ENCODE measurements at regions of chr10 and their contacts with region 1.

Region 1: DNA sequence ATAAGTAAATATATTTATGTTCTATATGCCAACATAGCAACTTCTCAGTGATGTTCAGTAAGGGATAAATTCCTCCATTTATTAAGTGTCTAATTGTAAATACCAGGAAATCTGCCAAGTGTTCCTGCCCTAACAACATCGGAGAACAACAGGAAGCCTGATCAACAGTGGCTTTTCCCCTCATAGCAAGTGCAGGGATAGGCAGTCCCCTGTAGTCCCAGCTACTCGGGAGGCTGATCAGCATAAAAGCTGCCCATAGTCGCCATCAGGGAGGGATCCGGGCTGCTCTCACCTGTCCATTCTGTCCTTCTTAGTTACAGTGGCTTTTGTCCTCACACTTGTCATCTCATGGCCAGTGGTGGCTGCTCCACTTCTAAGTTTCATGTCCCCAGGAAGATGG is 141.3 kb downstream of the IDE start:
- DNase-seq: no peak
- ATAC-seq: peak in 1 of 4 donors; percentile 37
- H3K4me3 ChIP-seq: no peak overlapping the region
- H3K27ac ChIP-seq: peak overlapping the region in 11 of 12 donors; percentile 1 to 75 (median 65)
- H3K4me1 ChIP-seq: peaks cover 0 to 33% (median 14%) of the 10 kb centered on the region in 12 donors
- H3K27me3 ChIP-seq: no peaks in the 10 kb centered on the region
- CTCF ChIP-seq: no peak
- POLR2A ChIP-seq: no peak

Region 2: DNA sequence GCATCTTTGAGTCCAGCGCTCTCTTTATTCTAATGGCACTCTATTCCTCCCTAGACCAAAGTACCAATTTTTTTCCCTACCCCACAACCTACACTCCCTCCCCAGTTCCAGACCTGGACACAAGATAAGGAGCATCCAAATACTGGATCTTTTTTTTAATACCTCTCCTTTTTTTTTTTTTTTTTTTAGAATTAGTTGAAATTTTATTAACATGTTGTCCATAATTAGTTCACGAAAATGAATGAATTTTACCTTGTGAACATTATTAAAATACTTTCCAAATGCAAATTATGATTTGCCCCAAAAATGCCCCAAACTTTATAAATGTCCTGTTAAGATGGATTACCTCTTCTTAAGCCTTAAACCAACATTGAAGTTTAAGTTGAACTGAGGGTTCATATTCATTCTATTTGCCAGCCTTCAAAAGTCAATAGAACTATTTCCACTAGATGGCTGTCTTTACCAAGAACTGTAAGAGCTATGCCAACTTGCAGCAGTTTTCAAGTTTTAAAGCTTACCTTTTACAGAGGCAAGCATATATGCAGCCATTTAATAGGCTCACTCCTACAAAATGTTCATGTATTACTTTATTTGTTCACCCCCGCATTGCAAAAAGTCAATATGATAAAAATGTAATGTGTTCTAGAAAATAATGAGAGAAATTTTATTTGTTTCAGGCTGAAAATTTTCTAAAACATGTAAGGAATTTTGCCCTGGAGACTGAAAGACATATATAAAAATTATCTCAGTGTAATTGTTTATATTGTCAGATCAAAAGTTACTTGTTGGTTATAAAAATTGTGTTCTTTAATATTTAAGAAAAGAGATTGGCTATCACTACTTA is 674.1 kb before region 1 on chr10:
- intact Hi-C with region 1: loop called in 5 of 10 experiments (anchors 5 to 10 kb)
- DNase-seq: no peak
- ATAC-seq: peak in 1 of 4 donors; percentile 43
- H3K4me3 ChIP-seq: no peak overlapping the region
- H3K27ac ChIP-seq: no peak overlapping the region
- H3K4me1 ChIP-seq: no peaks in the 10 kb centered on the region
- H3K27me3 ChIP-seq: no peaks in the 10 kb centered on the region
- CTCF ChIP-seq: peak; percentile 31 to 66 (median 49)
- POLR2A ChIP-seq: no peak

Region 3: DNA sequence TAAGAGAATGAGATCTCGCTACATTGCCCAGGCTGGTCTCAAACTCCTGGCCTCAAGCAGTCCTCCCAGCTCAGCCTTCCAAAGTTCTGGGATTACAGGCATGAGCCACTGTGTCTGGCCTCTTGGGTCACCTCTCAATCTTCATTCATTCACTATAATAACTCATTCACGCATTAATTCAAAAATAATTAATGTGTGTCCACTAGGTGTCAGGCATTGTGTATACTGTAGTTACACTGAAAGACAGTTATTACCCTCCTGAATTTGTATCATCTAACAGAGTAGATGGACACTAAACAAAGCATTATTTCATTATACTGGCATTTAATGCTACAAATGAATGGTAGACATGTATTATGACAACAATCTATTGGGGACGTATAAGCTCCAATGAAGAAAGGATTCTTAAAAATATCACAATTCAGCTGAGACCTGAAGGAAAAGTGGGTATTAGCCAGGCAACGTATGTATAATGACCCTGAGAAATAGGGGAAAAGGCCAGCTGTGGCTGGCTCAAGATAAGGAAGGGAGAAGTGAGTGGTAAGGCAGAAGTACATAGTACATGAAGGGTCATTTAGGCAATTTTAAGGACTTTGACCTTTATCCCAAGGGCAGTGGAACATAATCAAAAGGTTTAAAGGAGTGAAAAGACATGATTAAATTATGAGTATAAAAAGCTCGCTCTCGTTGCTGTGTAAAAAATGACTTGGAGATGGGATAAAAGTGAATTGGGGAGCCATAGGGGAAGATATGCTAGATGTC is 358.3 kb before region 1 on chr10:
- intact Hi-C with region 1: loop called in 1 of 10 experiments (anchors 5 kb)
- DNase-seq: no peak
- ATAC-seq: peak in 2 of 4 donors; percentile 45 to 53
- H3K4me3 ChIP-seq: no peak overlapping the region
- H3K27ac ChIP-seq: no peak overlapping the region
- H3K4me1 ChIP-seq: peaks cover 0 to 9% (median 0%) of the 10 kb centered on the region in 12 donors
- H3K27me3 ChIP-seq: no peaks in the 10 kb centered on the region
- CTCF ChIP-seq: peak in 10 of 12 donors; percentile 8 to 33 (median 20)
- POLR2A ChIP-seq: no peak

Region 4: GRCh38 chr10:92087750-92088395 is 344.7 kb before region 1 on chr10:
- intact Hi-C with region 1: loop called (anchors 1 to 5 kb)
- DNase-seq: peak in 4 of 5 donors; percentile 57 to 71 (median 66)
- ATAC-seq: peak; percentile 93 to 94 (median 94)
- H3K4me3 ChIP-seq: no peak overlapping the region
- H3K27ac ChIP-seq: peak overlapping the region in 6 of 12 donors; percentile 19 to 49 (median 36)
- H3K4me1 ChIP-seq: peaks cover 0 to 38% (median 12%) of the 10 kb centered on the region in 12 donors
- H3K27me3 ChIP-seq: no peaks in the 10 kb centered on the region
- CTCF ChIP-seq: peak; percentile 58 to 87 (median 76)
- POLR2A ChIP-seq: no peak

Region 5: DNA sequence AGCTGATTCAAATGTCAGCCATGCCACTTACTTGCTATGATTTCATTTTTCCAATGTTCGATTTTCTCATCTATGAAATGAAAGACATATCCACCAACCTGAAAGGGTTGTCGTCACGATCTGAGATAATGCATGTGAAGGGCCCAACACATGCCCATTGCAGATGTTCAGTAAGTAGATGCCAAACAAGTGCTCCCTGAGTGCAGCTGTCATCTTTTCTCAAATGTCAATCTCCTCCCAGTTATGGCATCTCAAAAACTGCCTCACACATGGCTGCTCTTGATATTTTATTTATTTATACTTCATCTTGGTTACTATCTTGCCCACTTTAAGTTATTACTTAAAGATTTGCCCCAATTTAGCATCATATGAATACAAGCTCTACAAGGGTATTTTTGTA is 158.5 kb before region 1 on chr10:
- intact Hi-C with region 1: no loop called
- DNase-seq: no peak
- ATAC-seq: no peak
- H3K4me3 ChIP-seq: no peak overlapping the region
- H3K27ac ChIP-seq: no peak overlapping the region
- H3K4me1 ChIP-seq: peaks cover 0 to 14% (median 3%) of the 10 kb centered on the region in 12 donors
- H3K27me3 ChIP-seq: no peaks in the 10 kb centered on the region
- CTCF ChIP-seq: no peak
- POLR2A ChIP-seq: no peak

Region 6: GRCh38 chr10:92290837-92291615 is 141.6 kb before region 1 on chr10 and contains the starts of genes CPEB3 and MARCHF5:
- intact Hi-C with region 1: loop called in 5 of 10 experiments (anchors 5 to 10 kb)
- DNase-seq: peak; percentile 97 to 98 (median 98)
- ATAC-seq: peak; percentile 99 to 100 (median 99)
- H3K4me3 ChIP-seq: peak within 1 kb of the TSS; percentile 68 to 99 (median 93)
- H3K27ac ChIP-seq: peak within 1 kb of the TSS; percentile 83 to 99 (median 96)
- H3K4me1 ChIP-seq: peaks cover 0 to 29% (median 14%) of the 10 kb centered on the region in 12 donors
- H3K27me3 ChIP-seq: no peaks in the 10 kb centered on the region
- CTCF ChIP-seq: peak; percentile 48 to 75 (median 62)
- POLR2A ChIP-seq: peak in 1 of 2 donors; percentile 79
- total RNA-seq, gene CPEB3: 6.2 to 17.2 (median 10.1) TPM
- total RNA-seq, gene MARCHF5: 14.8 to 55.7 (median 29.4) TPM

Region 7: GRCh38 chr10:92366412-92367021 is 66.1 kb before region 1 on chr10:
- intact Hi-C with region 1: loop called in 2 of 10 experiments (anchors 5 to 10 kb)
- DNase-seq: no peak
- ATAC-seq: no peak
- H3K4me3 ChIP-seq: no peak overlapping the region
- H3K27ac ChIP-seq: no peak overlapping the region
- H3K4me1 ChIP-seq: no peaks in the 10 kb centered on the region
- H3K27me3 ChIP-seq: no peaks in the 10 kb centered on the region
- CTCF ChIP-seq: peak in 2 of 12 donors; percentile 7 to 21
- POLR2A ChIP-seq: no peak

Region 8: DNA sequence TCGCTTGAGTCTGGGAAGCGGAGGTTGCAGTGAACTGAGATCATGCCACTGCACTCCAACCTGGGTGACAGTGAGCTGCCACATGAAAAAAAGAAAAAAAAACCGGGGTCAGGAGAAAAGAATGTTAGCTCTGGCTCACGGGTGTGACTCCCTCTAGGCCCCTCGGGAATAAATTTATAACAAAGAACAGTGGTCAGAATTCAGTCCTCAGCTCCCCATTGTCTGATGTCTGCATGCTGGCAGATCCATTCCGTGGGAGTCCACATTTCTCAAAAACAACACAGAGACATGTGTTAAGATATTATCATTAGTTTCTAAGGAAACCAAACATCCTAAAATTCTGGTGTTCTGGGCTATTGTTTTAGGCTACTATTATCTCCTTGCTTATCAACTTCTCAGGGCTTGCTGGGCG is 51.0 kb before region 1 on chr10:
- intact Hi-C with region 1: loop called in 2 of 10 experiments (anchors 2 to 5 kb)
- DNase-seq: peak in 2 of 5 donors; percentile 24 to 44
- ATAC-seq: peak; percentile 26 to 96 (median 70)
- H3K4me3 ChIP-seq: no peak overlapping the region
- H3K27ac ChIP-seq: peak overlapping the region in 6 of 12 donors; percentile 43 to 74 (median 62)
- H3K4me1 ChIP-seq: peaks cover 0 to 14% (median 0%) of the 10 kb centered on the region in 12 donors
- H3K27me3 ChIP-seq: no peaks in the 10 kb centered on the region
- CTCF ChIP-seq: no peak
- POLR2A ChIP-seq: no peak

Measured in heart left ventricle (tissue), 16 donors.